Panc1 (cell line): ENCODE measurements at regions of chr19 and their contacts with region 1.

Region 1: DNA sequence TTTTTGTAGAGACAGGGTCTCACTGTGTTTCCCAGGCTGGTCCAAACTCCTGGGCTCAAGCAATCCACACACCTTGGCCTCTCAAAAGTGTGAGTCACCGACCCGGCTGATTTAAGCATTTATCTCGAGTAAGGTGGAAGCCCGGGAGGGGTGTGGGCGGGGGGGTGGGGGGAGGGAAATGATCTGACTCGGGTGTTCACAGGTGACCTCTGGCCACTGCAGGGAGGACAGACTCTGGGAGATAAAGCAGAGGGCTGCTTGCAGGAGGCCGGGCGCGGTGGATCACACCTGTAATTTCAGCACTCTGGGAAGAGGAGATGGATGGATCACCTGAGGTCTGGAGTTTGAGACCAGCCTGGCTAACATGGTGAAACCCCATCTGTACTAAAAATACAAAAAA is 7.9 kb downstream of the DENND1C start:
- DNase-seq: no peak
- ATAC-seq: no peak
- H3K4me3 ChIP-seq: no peak overlapping the region
- H3K27ac ChIP-seq: no peak overlapping the region
- H3K4me1 ChIP-seq: no peaks in the 10 kb centered on the region
- H3K27me3 ChIP-seq: no peaks in the 10 kb centered on the region
- CTCF ChIP-seq: no peak

Region 2: DNA sequence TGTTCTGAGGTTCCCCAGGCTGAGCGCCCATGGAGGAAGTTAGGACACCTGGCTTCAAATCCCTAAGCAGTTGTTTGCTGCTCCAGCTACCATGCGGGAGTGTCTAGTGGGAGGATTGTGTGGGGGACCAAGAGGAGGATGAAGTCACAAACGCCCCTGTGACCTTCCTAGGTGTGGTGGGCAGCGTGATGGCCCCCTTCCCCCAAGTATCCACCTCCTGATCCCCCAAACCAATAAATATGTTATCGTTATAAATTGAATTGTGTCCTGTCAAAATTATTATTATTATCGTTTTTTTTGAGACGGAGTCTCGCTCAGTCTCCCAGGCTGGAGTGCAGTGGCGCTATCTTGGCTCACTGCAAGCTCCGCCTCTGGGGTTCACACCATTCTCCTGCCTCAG is 40.0 kb before region 1 on chr19 and contains the start of gene SLC25A41:
- CTCF ChIA-PET with region 1: no interaction called
- POLR2A ChIA-PET with region 1: interaction called, 11 read pairs
- in situ Hi-C with region 1: no loop called
- intact Hi-C with region 1: no loop called
- DNase-seq: no peak
- ATAC-seq: no peak
- H3K4me3 ChIP-seq: no peak within 1 kb of the TSS
- H3K27ac ChIP-seq: no peak within 1 kb of the TSS
- H3K4me1 ChIP-seq: no peaks in the 10 kb centered on the region
- H3K27me3 ChIP-seq: no peaks in the 10 kb centered on the region
- CTCF ChIP-seq: no peak
- total RNA-seq, gene SLC25A41: 0.21 TPM